IMR-90 (cell line): ENCODE measurements at regions of chr5 and their contacts with region 1.

Region 1: DNA sequence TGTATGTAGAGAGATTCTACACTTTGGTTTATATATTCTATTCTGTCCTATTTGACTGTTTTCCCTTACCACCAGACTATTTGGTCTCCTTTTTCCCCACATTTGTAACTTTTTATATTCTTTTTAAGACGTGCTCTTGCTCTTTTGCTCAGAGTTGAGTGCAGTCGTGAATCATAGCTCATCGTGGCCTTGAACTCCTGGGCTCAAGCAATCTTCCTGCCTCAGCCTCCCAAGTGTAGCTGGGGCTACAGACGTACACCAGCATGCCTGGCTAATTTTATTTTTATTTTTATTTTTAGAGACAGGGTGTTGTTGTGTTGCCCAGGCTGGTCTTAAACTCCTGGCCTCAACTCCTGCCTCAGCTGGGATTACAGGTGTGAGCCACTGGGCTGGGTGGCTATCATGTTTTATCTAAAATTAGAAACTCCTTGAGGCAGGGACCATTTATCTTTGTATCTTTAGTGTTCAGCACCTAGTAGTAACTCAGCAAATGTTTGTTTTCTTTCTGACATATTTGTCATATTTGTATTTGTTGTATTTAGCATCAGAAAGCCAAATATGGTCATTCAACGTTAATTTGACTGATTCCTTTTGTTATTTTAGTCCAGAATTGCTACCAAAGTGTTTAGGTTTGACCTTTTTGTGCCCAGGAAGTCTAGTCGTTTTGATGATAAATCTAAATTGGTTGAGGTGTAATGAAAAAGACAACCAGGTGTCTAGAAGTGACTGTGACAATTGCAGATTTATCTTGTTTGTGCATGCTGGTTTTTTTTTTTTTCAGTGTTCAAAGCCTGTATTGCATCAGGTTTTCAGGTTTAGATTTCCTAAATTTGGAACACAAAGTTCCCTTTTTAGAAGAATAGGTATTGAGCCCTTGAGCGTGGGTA is 44.3 kb downstream of the ERBIN start:
- DNase-seq: no peak
- ATAC-seq: no peak
- H3K4me3 ChIP-seq: no peak overlapping the region
- H3K27ac ChIP-seq: no peak overlapping the region
- H3K4me1 ChIP-seq: peaks cover 4% of the 10 kb centered on the region
- H3K27me3 ChIP-seq: no peaks in the 10 kb centered on the region
- CTCF ChIP-seq: no peak
- POLR2A ChIP-seq: no peak
- RAD21 ChIP-seq: no peak

Region 2: DNA sequence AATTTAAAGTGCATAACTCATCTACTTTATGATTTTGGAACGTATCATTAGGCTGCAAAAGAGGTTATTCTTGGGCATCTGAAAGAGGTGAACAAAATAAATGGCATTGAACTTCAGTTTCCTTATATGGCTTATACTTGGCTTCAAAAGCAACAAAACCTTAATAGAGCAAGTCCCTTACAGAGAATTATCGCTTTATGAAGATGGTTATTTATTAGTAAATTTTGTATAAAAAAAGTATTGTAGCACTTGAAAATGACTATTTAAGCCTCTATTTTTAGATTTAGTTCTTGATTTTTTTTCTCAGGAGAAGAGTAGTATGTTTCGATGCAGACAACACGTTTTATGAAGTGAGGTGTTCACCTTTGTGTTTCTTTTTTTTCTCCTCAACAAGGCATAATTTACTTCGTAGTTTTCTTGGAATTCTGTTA is 42.4 kb before region 1 on chr5:
- CTCF ChIA-PET with region 1: no interaction called
- POLR2A ChIA-PET with region 1: no interaction called
- dilution Hi-C with region 1: no loop called
- in situ Hi-C with region 1: no loop called
- intact Hi-C with region 1: no loop called
- DNase-seq: no peak
- ATAC-seq: no peak
- H3K4me3 ChIP-seq: peak overlapping the region; percentile 75
- H3K27ac ChIP-seq: peak overlapping the region; percentile 47; the same call in 1 of the 2 replicates
- H3K4me1 ChIP-seq: peaks cover 2% of the 10 kb centered on the region; the same call in 1 of the 2 replicates
- H3K27me3 ChIP-seq: no peaks in the 10 kb centered on the region
- CTCF ChIP-seq: no peak
- POLR2A ChIP-seq: no peak
- RAD21 ChIP-seq: no peak

Region 3: GRCh38 chr5:66010476-66010875 is 39.8 kb after region 1 on chr5:
- CTCF ChIA-PET with region 1: no interaction called
- POLR2A ChIA-PET with region 1: no interaction called
- dilution Hi-C with region 1: no loop called
- in situ Hi-C with region 1: no loop called
- intact Hi-C with region 1: loop called (anchors 5 kb)
- DNase-seq: peak; percentile 39
- ATAC-seq: peak; percentile 68
- H3K4me3 ChIP-seq: no peak overlapping the region
- H3K27ac ChIP-seq: no peak overlapping the region
- H3K4me1 ChIP-seq: peaks cover 2% of the 10 kb centered on the region; the same call in 1 of the 2 replicates
- H3K27me3 ChIP-seq: no peaks in the 10 kb centered on the region
- CTCF ChIP-seq: no peak
- POLR2A ChIP-seq: no peak
- RAD21 ChIP-seq: no peak